Colonic mucosa (tissue), 4 donors: ENCODE measurements at regions of chr16 and their contacts with region 1.

Region 1: GRCh38 chr16:23410176-23410575 is 42.8 kb downstream of the COG7 start:
- DNase-seq: no peak
- H3K4me3 ChIP-seq: no peak overlapping the region
- H3K27ac ChIP-seq: no peak overlapping the region
- H3K4me1 ChIP-seq: no peaks in the 10 kb centered on the region
- H3K27me3 ChIP-seq: no peaks in the 10 kb centered on the region
- CTCF ChIP-seq: no peak

Region 2: GRCh38 chr16:23348579-23349469 is 61.4 kb before region 1 on chr16:
- intact Hi-C with region 1: loop called (anchors 10 kb)
- DNase-seq: no peak
- H3K4me3 ChIP-seq: no peak overlapping the region
- H3K27ac ChIP-seq: no peak overlapping the region
- H3K4me1 ChIP-seq: peaks cover 5% of the 10 kb centered on the region
- H3K27me3 ChIP-seq: no peaks in the 10 kb centered on the region
- CTCF ChIP-seq: no peak